ENCODE measurements at regions of chr3 and their contacts with region 1.

Region 1: GRCh38 chr3:108598375-108598774 is 8.9 kb downstream of the DZIP3 start:
- DNase-seq: no peak
- H3K4me3 ChIP-seq: no peak overlapping the region
- H3K27ac ChIP-seq: no peak overlapping the region
- H3K4me1 ChIP-seq: 0 out of 2 replicates have a peak, but pooled peaks cover under 1% of the 10 kb centered on the region
- H3K27me3 ChIP-seq: no peaks in the 10 kb centered on the region
- CTCF ChIP-seq: no peak

Region 2: DNA sequence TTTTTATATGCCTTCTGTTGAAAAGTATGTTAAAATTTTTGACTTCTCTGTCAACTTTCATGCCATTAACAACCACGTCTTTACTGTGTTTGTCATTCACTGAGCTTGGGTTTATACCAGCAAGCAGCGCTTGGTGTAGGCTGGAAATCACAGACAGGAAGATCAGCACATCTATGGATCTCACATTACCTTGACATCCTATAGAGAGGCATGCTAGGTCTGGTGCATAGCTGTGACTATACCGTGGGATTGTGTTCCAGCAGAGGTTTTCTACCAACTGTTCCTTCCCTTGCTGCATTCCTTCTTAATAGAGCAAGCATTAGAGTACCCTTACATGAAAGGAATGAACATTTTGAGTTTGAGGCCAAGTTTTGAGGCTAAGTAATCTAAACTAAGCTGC is 44.2 kb after region 1 on chr3:
- CTCF ChIA-PET with region 1: no interaction called
- POLR2A ChIA-PET with region 1: interaction called, 11 read pairs
- intact Hi-C with region 1: no loop called
- DNase-seq: no peak
- H3K4me3 ChIP-seq: no peak overlapping the region
- H3K27ac ChIP-seq: no peak overlapping the region
- H3K4me1 ChIP-seq: no peaks in the 10 kb centered on the region
- H3K27me3 ChIP-seq: no peaks in the 10 kb centered on the region
- CTCF ChIP-seq: no peak

Region 3: GRCh38 chr3:109869586-109869985 is 1271.2 kb after region 1 on chr3:
- CTCF ChIA-PET with region 1: no interaction called
- POLR2A ChIA-PET with region 1: no interaction called
- intact Hi-C with region 1: no loop called
- DNase-seq: no peak
- H3K4me3 ChIP-seq: no peak overlapping the region
- H3K27ac ChIP-seq: no peak overlapping the region
- H3K4me1 ChIP-seq: no peaks in the 10 kb centered on the region
- H3K27me3 ChIP-seq: no peaks in the 10 kb centered on the region
- CTCF ChIP-seq: no peak

Measured in PC-9 (cell line).